Dendritic cell treated with granulocyte-macrophage colony-stimulating factor and Interleukin-4, amounts not matched to agents 40 ng/mL and 50 ng/mL, for 4 days (primary cell): ENCODE measurements at regions of chrX and their contacts with region 1.

Region 1: GRCh38 chrX:39149761-39150160 is 348.5 kb downstream of the MID1IP1 start:
- H3K4me3 Mint-ChIP-seq: no peak overlapping the region
- H3K27ac Mint-ChIP-seq: no peak overlapping the region
- H3K4me1 Mint-ChIP-seq: peaks cover 12% of the 10 kb centered on the region
- H3K27me3 Mint-ChIP-seq: no peaks in the 10 kb centered on the region

Region 2: DNA sequence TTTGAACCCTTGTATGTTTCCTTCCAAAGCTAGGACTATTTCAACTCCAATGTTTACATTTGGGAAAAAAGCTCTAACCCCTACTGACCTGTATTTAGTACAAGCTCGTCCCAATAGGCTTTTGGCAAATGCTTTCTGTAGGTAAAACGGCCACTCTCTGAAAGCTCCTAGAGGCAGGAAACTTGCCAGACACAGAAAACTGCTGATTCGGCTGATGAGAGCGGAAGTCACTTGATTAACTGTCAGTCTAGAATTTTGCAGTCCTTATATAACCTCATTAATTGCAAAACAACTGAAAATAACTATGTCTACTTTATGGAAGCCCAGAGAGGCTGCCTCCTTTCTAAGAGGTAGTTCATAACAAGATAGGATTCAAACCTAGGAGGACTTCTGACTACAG is 480.3 kb before region 1 on chrX:
- intact Hi-C with region 1: loop called (anchors 5 kb)
- H3K4me3 Mint-ChIP-seq: no peak overlapping the region
- H3K27ac Mint-ChIP-seq: no peak overlapping the region
- H3K4me1 Mint-ChIP-seq: peaks cover 11% of the 10 kb centered on the region
- H3K27me3 Mint-ChIP-seq: no peaks in the 10 kb centered on the region

Region 3: DNA sequence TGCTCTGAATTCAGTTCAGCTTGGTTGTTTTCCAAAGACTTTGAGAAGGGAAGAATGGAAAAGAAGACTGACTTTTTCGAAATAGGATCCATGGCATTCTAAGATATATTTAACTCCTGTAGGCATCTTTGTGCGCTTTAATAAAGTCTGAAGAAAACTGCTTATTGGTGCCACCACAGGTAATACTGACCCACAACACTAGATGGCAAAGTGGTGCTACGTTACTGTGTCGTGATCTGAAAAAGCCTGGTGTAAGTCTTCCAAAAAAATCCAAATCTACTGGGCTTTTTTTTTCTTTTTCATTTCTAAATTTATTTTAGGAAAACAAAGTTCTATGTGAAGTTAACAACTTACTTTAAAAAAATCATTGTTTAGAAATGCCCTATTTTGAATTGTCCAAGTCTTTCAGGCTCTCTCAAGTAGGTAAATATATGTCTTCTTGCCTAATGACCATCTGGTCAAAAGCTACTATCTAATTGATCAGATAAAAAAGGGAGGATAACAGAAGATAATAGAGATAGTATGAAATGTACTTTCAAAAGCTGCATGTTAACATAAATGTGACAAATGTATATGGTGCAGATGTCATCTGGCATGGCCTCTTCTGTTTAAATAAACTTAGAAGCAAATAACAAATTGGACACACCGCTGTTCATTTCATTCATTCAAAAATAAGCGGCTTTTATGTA is 395.5 kb before region 1 on chrX:
- intact Hi-C with region 1: loop called (anchors 5 kb)
- H3K4me3 Mint-ChIP-seq: no peak overlapping the region
- H3K27ac Mint-ChIP-seq: no peak overlapping the region
- H3K4me1 Mint-ChIP-seq: peaks cover 8% of the 10 kb centered on the region
- H3K27me3 Mint-ChIP-seq: no peaks in the 10 kb centered on the region

Region 4: DNA sequence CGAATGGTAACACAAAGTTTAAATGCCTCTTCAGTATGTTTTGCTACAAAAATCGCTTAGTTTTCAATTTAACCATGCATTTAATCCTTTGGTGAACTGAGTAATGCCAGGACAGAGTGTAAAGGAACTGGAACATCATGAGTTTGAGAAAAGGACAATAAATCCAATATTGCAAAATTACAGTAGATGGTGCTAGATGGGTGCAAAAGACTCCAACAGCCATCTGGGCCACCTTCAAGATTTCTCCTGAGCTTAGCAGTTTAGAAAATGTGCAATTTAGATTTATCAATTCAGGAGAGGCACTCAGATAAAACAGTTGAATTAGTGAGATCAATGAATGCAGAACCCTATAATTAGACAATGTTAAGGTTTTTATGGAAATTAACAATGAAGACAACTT is 381.7 kb before region 1 on chrX:
- intact Hi-C with region 1: loop called (anchors 5 kb)
- H3K4me3 Mint-ChIP-seq: no peak overlapping the region
- H3K27ac Mint-ChIP-seq: no peak overlapping the region
- H3K4me1 Mint-ChIP-seq: no peaks in the 10 kb centered on the region
- H3K27me3 Mint-ChIP-seq: no peaks in the 10 kb centered on the region

Region 5: GRCh38 chrX:38985375-38985774 is 164.4 kb before region 1 on chrX:
- intact Hi-C with region 1: loop called (anchors 5 kb)
- H3K4me3 Mint-ChIP-seq: no peak overlapping the region
- H3K27ac Mint-ChIP-seq: no peak overlapping the region
- H3K4me1 Mint-ChIP-seq: peaks cover 24% of the 10 kb centered on the region
- H3K27me3 Mint-ChIP-seq: peaks cover 2% of the 10 kb centered on the region